ENCODE measurements at regions of chr17 and their contacts with region 1.

Region 1: GRCh38 chr17:4939796-4940624 is at the starts of genes RNF167 and SLC25A11:
- DNase-seq: peak; percentile 95 to 97
- ATAC-seq: peak; percentile 90 to 92 (median 91)
- H3K4me3 ChIP-seq: peak within 1 kb of the TSS; percentile 80
- H3K27ac ChIP-seq: peak within 1 kb of the TSS; percentile 95
- H3K4me1 ChIP-seq: peaks cover 45% of the 10 kb centered on the region
- H3K27me3 ChIP-seq: no peaks in the 10 kb centered on the region
- CTCF ChIP-seq: no peak
- total RNA-seq, gene RNF167: 85.1 to 96.3 (median 87.3) TPM
- total RNA-seq, gene SLC25A11: 97.1 to 225 (median 143) TPM

Region 2: GRCh38 chr17:4908301-4908700 is 31.7 kb before region 1 on chr17:
- intact Hi-C with region 1: loop called (anchors 2 to 5 kb)
- DNase-seq: peak in 1 of 2 donors; percentile 61
- ATAC-seq: peak in 3 of 4 donors; percentile 2 to 13 (median 9)
- H3K4me3 ChIP-seq: no peak overlapping the region
- H3K27ac ChIP-seq: peak overlapping the region; percentile 75
- H3K4me1 ChIP-seq: peaks cover 3% of the 10 kb centered on the region
- H3K27me3 ChIP-seq: no peaks in the 10 kb centered on the region
- CTCF ChIP-seq: no peak

Region 3: DNA sequence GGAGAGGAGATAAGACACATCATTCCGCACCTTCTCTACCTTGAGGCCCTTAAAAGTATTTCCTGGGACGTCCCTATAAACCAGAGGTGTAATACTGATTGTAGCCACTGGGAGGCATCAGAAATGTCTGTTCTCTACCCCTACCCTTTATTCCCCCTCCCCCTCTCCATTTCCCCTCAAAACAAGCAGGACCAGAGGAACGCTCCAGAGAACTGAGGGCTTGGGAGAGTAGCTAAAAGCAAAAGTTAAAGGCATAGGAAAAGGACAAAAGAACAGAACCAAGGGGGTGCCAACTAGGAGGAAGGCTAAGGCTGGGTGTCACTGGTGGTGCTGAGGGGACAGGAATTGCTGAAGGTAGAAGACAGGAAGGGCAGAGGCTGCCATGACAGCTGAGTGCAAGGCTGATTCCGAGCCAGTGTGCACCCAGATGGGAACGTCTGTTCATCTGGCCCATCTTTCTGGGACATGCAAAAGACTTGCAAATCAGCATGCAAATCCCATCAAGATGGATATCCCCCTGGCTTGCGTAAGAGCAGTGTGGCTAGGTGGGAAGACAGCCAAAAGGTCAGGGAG is 40.7 kb after region 1 on chr17:
- intact Hi-C with region 1: loop called (anchors 5 kb)
- DNase-seq: no peak
- ATAC-seq: peak; percentile 64 to 87 (median 72)
- H3K4me3 ChIP-seq: no peak overlapping the region
- H3K27ac ChIP-seq: peak overlapping the region; percentile 23
- H3K4me1 ChIP-seq: peaks cover 5% of the 10 kb centered on the region
- H3K27me3 ChIP-seq: no peaks in the 10 kb centered on the region
- CTCF ChIP-seq: peak; percentile 69

Region 4: GRCh38 chr17:4986951-4987766 is 47.1 kb after region 1 on chr17 and contains the start of gene CAMTA2:
- intact Hi-C with region 1: loop called (anchors 5 kb)
- DNase-seq: peak; percentile 93 to 97
- ATAC-seq: peak; percentile 92 to 96 (median 95)
- H3K4me3 ChIP-seq: peak within 1 kb of the TSS; percentile 94
- H3K27ac ChIP-seq: peak within 1 kb of the TSS; percentile 97
- H3K4me1 ChIP-seq: peaks cover 20% of the 10 kb centered on the region
- H3K27me3 ChIP-seq: no peaks in the 10 kb centered on the region
- CTCF ChIP-seq: peak; percentile 79
- total RNA-seq, gene CAMTA2: 43.0 to 60.8 (median 51.0) TPM

Region 5: GRCh38 chr17:4997302-4998026 is 57.5 kb after region 1 on chr17 and contains the starts of genes INCA1 and KIF1C:
- intact Hi-C with region 1: loop called in 1 of 2 experiments (anchors 5 kb)
- DNase-seq: peak; percentile 95 to 98
- ATAC-seq: peak; percentile 83 to 85 (median 84)
- H3K4me3 ChIP-seq: peak within 1 kb of the TSS; percentile 96
- H3K27ac ChIP-seq: peak within 1 kb of the TSS; percentile 96
- H3K4me1 ChIP-seq: peaks cover 34% of the 10 kb centered on the region
- H3K27me3 ChIP-seq: no peaks in the 10 kb centered on the region
- CTCF ChIP-seq: peak; percentile 17
- total RNA-seq, gene INCA1: 2.9 to 4.9 (median 3.5) TPM
- total RNA-seq, gene KIF1C: 624 to 1,039 (median 691) TPM

Region 6: GRCh38 chr17:5078106-5079028 is 138.4 kb after region 1 on chr17 and contains the start of gene ZFP3:
- intact Hi-C with region 1: loop called in 1 of 2 experiments (anchors 5 kb)
- DNase-seq: peak; percentile 92 to 95
- ATAC-seq: peak; percentile 98 to 99 (median 99)
- H3K4me3 ChIP-seq: peak within 1 kb of the TSS; percentile 82
- H3K27ac ChIP-seq: peak within 1 kb of the TSS; percentile 95
- H3K4me1 ChIP-seq: peaks cover 10% of the 10 kb centered on the region
- H3K27me3 ChIP-seq: peaks cover 0 to 2% (median 0%) of the 10 kb centered on the region in 3 donors
- CTCF ChIP-seq: peak; percentile 12
- total RNA-seq, gene ZFP3: 6.8 to 12.3 (median 8.0) TPM

Region 7: GRCh38 chr17:5131146-5131715 is 191.2 kb after region 1 on chr17:
- intact Hi-C with region 1: no loop called
- DNase-seq: no peak
- ATAC-seq: no peak
- H3K4me3 ChIP-seq: no peak overlapping the region
- H3K27ac ChIP-seq: no peak overlapping the region
- H3K4me1 ChIP-seq: no peaks in the 10 kb centered on the region
- H3K27me3 ChIP-seq: no peaks in the 10 kb centered on the region
- CTCF ChIP-seq: no peak

Measured in psoas muscle (tissue), 8 donors.